ENCODE measurements at regions of chr17 and their contacts with region 1.

Region 1: GRCh38 chr17:78013683-78014467 is 55.4 kb downstream of the TNRC6C start:
- DNase-seq: no peak
- H3K4me3 Mint-ChIP-seq: no peak overlapping the region
- H3K27ac Mint-ChIP-seq: no peak overlapping the region
- H3K4me1 Mint-ChIP-seq: peaks cover 7% of the 10 kb centered on the region
- H3K27me3 Mint-ChIP-seq: no peaks in the 10 kb centered on the region

Region 2: GRCh38 chr17:77542551-77543490 is 471.1 kb before region 1 on chr17:
- intact Hi-C with region 1: loop called (anchors 2 kb)
- DNase-seq: peak; percentile 49
- H3K4me3 Mint-ChIP-seq: no peak overlapping the region
- H3K27ac Mint-ChIP-seq: no peak overlapping the region
- H3K4me1 Mint-ChIP-seq: peaks cover 10% of the 10 kb centered on the region
- H3K27me3 Mint-ChIP-seq: peaks cover 12% of the 10 kb centered on the region

Region 3: GRCh38 chr17:77772461-77772897 is 241.4 kb before region 1 on chr17:
- intact Hi-C with region 1: loop called (anchors 1 kb)
- DNase-seq: peak; percentile 43
- H3K4me3 Mint-ChIP-seq: no peak overlapping the region
- H3K27ac Mint-ChIP-seq: no peak overlapping the region
- H3K4me1 Mint-ChIP-seq: peaks cover 12% of the 10 kb centered on the region
- H3K27me3 Mint-ChIP-seq: peaks cover 14% of the 10 kb centered on the region

Region 4: GRCh38 chr17:77963441-77963840 is 50.4 kb before region 1 on chr17:
- intact Hi-C with region 1: loop called (anchors 5 kb)
- DNase-seq: no peak
- H3K4me3 Mint-ChIP-seq: no peak overlapping the region
- H3K27ac Mint-ChIP-seq: no peak overlapping the region
- H3K4me1 Mint-ChIP-seq: peaks cover 49% of the 10 kb centered on the region
- H3K27me3 Mint-ChIP-seq: no peaks in the 10 kb centered on the region